PC-9 (cell line): ENCODE measurements at regions of chr6 and their contacts with region 1.

Region 1: DNA sequence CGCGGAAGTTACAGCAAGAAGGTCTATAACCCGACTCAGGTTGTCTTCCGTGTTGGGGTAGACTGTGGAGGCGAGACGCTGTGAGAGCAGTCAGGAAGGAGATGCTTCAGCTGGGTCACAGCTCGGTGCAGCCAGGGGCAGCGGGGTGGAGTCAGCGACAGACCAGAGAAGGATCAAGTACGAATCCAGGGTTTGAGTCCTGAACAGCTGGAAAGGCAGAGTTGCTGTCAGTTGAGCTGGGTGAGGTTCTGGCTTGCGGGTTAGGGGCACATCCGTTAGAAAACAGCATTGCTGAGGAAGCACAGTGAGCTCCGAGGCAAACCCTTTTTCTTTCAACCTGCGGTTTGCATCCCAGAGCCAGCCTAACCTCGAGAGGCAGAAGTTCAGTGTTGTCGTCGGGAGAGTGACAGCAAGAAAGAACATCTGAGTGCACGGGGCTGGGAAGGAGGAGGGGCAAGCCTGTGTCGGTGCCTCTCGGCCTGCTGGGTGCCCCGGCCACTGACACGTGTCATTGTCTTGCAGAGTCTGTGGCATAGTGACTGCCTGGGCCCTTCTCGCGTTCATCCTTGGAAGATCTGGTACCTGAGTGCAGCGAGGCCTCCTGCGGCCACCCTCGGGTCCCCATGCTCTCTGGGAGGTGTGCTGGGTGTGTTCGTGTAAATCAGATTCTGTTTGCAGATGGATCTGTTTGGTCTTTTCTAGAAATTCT is 20.0 kb downstream of the PNLDC1 start:
- DNase-seq: no peak
- H3K4me3 ChIP-seq: no peak overlapping the region
- H3K27ac ChIP-seq: no peak overlapping the region
- H3K4me1 ChIP-seq: no peaks in the 10 kb centered on the region
- H3K27me3 ChIP-seq: peaks cover 46% of the 10 kb centered on the region
- CTCF ChIP-seq: no peak

Region 2: GRCh38 chr6:159908535-159908934 is 88.4 kb after region 1 on chr6:
- CTCF ChIA-PET with region 1: no interaction called
- POLR2A ChIA-PET with region 1: no interaction called
- intact Hi-C with region 1: no loop called
- DNase-seq: no peak
- H3K4me3 ChIP-seq: no peak overlapping the region
- H3K27ac ChIP-seq: no peak overlapping the region
- H3K4me1 ChIP-seq: no peaks in the 10 kb centered on the region
- H3K27me3 ChIP-seq: peaks cover 96% of the 10 kb centered on the region
- CTCF ChIP-seq: no peak

Region 3: GRCh38 chr6:160000280-160000704 is 180.2 kb after region 1 on chr6:
- CTCF ChIA-PET with region 1: no interaction called
- POLR2A ChIA-PET with region 1: interaction called, 14 read pairs
- intact Hi-C with region 1: no loop called
- DNase-seq: no peak
- H3K4me3 ChIP-seq: no peak overlapping the region
- H3K27ac ChIP-seq: no peak overlapping the region
- H3K4me1 ChIP-seq: no peaks in the 10 kb centered on the region
- H3K27me3 ChIP-seq: no peaks in the 10 kb centered on the region
- CTCF ChIP-seq: no peak